Activated T-helper 2 cell treated with anti-CD3 and anti-CD28 coated beads, Interferon-gamma antibody, Interleukin-2, Interleukin-4, amounts not matched to agents 10 μg/mL and 5 μg/mL and 100 μg/mL, durations not matched to agents 14 hours and 24 hours and 36 hours (primary cell): ENCODE measurements at regions of chr10 and their contacts with region 1.

Region 1: GRCh38 chr10:91220194-91220953 is at the start of gene PCGF5:
- DNase-seq: peak; percentile 88
- H3K4me3 Mint-ChIP-seq: peak within 1 kb of the TSS; percentile 92
- H3K27ac Mint-ChIP-seq: peak within 1 kb of the TSS; percentile 86
- H3K4me1 Mint-ChIP-seq: peaks cover 38% of the 10 kb centered on the region
- H3K27me3 Mint-ChIP-seq: no peaks in the 10 kb centered on the region
- total RNA-seq, gene PCGF5: 35.9 and 36.9 TPM in 2 replicates

Region 2: GRCh38 chr10:90947030-90947940 is 273.1 kb before region 1 on chr10:
- intact Hi-C with region 1: no loop called
- DNase-seq: peak; percentile 14
- H3K4me3 Mint-ChIP-seq: peak overlapping the region; percentile 18
- H3K27ac Mint-ChIP-seq: peak overlapping the region; percentile 82
- H3K4me1 Mint-ChIP-seq: peaks cover 30% of the 10 kb centered on the region
- H3K27me3 Mint-ChIP-seq: peaks cover 4% of the 10 kb centered on the region

Region 3: DNA sequence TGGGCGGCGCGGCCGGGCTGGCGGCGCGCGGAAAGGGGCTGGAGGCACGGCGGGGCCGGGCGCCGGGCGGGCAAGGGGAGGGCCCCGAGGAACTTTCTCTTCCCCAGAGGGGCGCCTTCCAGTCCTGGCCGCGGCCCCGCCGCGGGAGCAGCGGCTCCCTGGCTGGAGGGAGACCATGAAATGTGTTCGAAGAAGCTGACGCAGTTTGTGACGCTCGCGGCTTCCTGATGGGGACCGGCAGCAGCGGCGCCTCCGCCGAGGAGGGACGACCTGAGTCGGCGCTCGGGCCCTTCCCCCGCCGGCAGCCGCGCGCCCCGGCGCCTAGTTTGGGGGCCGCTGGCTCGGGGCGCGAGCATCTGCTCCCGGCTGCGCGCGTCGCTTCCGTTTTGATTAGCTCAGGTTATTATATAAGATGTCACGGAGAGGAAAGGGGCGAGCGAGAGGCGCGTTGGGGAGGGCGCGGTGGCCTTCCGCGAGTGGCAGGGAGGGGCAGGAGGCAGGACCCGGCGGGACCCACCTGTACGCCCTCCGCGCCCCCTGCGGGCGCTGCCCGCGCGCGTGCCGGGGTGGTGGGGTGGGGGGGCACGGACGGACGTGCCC is 57.0 kb before region 1 on chr10:
- intact Hi-C with region 1: loop called (anchors 1 kb)
- DNase-seq: peak; percentile 70
- H3K4me3 Mint-ChIP-seq: peak overlapping the region; percentile 85
- H3K27ac Mint-ChIP-seq: peak overlapping the region; percentile 76
- H3K4me1 Mint-ChIP-seq: peaks cover 34% of the 10 kb centered on the region
- H3K27me3 Mint-ChIP-seq: no peaks in the 10 kb centered on the region